AG04450 (cell line): ENCODE measurements at regions of chr6 and their contacts with region 1.

Region 1: GRCh38 chr6:111057074-111057752 is 30.1 kb upstream of the SLC16A10 start:
- DNase-seq: peak; percentile 11
- H3K4me3 ChIP-seq: no peak overlapping the region
- H3K27ac ChIP-seq: no peak overlapping the region
- H3K27me3 ChIP-seq: peaks cover 19% of the 10 kb centered on the region
- CTCF ChIP-seq: peak; percentile 87

Region 2: DNA sequence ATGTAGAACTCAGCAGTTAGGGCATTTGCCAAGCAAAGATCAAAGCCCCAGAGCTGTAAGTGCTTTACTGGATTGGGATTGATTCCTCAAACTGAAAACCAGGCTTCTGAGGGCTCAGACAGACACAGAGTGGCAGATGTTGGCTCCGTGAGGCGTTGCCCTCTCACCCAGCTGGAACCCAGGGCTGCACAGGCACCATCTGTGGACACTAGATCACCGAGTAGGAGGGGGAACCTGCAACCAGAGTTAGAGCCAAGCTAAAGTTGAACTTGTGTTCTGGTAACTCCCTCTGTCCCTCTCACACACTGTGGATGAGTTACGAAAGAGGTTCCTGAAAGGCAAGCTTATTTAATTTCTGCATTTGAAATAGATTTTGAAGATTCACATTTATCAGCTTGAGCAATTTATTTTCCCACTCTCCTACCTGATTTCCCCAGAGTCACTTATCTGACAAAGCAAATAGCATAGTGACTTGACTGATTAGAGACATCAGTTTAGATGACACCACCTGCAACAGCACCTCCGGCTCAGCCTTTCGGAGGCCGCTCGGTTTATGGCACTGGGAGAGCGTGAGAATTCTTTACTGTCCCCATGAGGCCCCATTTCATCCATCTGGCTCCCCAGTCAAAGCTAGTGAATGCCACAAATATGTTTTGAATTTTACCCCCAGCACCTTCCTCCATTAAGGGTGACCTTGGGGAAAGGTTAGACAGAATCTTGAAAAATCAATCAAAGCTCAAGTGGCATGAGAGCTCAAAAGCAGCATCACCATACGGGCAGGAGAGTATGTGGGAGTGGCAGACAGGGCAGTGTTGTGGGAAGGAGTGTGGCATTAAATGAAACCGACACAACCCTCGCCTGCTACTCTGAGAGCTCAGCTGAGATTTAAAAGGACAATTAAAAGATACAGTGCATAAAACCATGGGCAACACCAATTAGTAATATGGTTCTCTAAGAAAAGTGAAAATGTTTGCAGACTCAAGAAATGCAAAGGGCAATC is 26.9 kb before region 1 on chr6:
- CTCF ChIA-PET with region 1: interaction called, 11 read pairs
- POLR2A ChIA-PET with region 1: no interaction called
- DNase-seq: no peak
- H3K4me3 ChIP-seq: no peak overlapping the region
- H3K27ac ChIP-seq: no peak overlapping the region
- H3K27me3 ChIP-seq: no peaks in the 10 kb centered on the region
- CTCF ChIP-seq: no peak

Region 3: DNA sequence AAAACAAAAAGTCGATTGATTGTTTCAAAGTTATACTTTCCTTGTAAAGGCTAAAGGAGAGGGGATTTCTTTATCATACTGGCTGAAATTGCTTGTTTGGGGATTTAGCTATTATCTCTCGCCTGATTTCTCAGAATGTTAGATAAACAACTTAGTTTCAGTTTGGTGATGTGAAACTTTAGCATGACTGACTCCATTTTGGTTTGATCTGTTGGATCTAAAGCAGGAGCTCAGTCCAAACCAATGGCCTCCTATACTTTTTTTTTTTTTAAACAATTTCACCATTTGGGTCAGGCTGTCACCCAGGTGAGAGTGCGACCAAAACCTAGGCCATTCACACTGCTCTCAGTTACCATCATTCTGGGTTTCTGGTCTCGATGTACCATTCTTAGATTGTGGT is 15.3 kb before region 1 on chr6:
- CTCF ChIA-PET with region 1: interaction called, 24 read pairs
- POLR2A ChIA-PET with region 1: no interaction called
- DNase-seq: no peak
- H3K4me3 ChIP-seq: no peak overlapping the region
- H3K27ac ChIP-seq: no peak overlapping the region
- H3K27me3 ChIP-seq: peaks cover 5% of the 10 kb centered on the region
- CTCF ChIP-seq: no peak

Region 4: GRCh38 chr6:111070105-111071005 is 13.1 kb after region 1 on chr6:
- CTCF ChIA-PET with region 1: interaction called, 12 read pairs
- POLR2A ChIA-PET with region 1: no interaction called
- DNase-seq: no peak
- H3K4me3 ChIP-seq: no peak overlapping the region
- H3K27ac ChIP-seq: no peak overlapping the region
- H3K27me3 ChIP-seq: peaks cover 16% of the 10 kb centered on the region
- CTCF ChIP-seq: no peak

Region 5: GRCh38 chr6:111076024-111076695 is 18.9 kb after region 1 on chr6:
- CTCF ChIA-PET with region 1: interaction called, 12 read pairs
- POLR2A ChIA-PET with region 1: no interaction called
- DNase-seq: no peak
- H3K4me3 ChIP-seq: no peak overlapping the region
- H3K27ac ChIP-seq: no peak overlapping the region
- H3K27me3 ChIP-seq: peaks cover 12% of the 10 kb centered on the region
- CTCF ChIP-seq: no peak

Region 6: GRCh38 chr6:111210194-111210728 is 153.0 kb after region 1 on chr6:
- CTCF ChIA-PET with region 1: interaction called, 42 read pairs
- POLR2A ChIA-PET with region 1: no interaction called
- DNase-seq: peak; percentile 16
- H3K4me3 ChIP-seq: no peak overlapping the region
- H3K27ac ChIP-seq: no peak overlapping the region
- H3K27me3 ChIP-seq: no peaks in the 10 kb centered on the region
- CTCF ChIP-seq: peak; percentile 78

Region 7: GRCh38 chr6:111259089-111259831 is 202.0 kb after region 1 on chr6:
- CTCF ChIA-PET with region 1: interaction called, 25 read pairs
- POLR2A ChIA-PET with region 1: no interaction called
- DNase-seq: peak; percentile 99
- H3K4me3 ChIP-seq: peak overlapping the region; percentile 88
- H3K27ac ChIP-seq: peak overlapping the region; percentile 91
- H3K27me3 ChIP-seq: no peaks in the 10 kb centered on the region
- CTCF ChIP-seq: peak; percentile 92